Right cardiac atrium (tissue), 5 donors: ENCODE measurements at regions of chr2 and their contacts with region 1.

Region 1: DNA sequence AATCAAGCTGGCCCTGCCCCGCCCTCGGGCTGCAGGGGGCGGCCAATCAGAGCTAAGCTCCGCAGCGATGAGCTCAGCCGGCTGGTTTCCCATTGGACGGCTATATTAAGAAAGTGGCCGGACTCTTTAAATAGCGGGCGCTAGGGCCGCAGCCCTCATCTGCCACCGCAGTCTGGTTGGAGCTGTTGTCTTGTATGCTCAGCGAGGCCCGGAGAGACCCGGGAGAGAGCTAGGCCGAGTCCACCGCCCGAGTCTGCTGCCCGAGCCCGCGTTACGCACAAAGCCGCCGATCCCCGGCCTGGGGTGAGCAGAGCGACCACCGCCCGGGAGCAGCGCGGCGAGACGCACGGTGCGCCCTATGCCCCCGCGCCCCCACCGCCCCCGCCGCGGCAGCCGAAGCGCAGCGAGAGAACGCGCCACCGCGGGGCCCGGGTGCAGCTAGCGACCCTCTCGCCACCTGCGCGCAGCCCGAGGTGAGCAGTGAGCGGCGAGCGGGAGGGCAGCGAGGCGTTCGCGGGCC is at the start of gene RHOB:
- DNase-seq: peak; percentile 97 to 99 (median 99)
- ATAC-seq: peak; percentile 93 to 94
- H3K4me3 ChIP-seq: peak within 1 kb of the TSS; percentile 81
- H3K27ac ChIP-seq: peak within 1 kb of the TSS; percentile 97
- H3K4me1 ChIP-seq: peaks cover 5% of the 10 kb centered on the region
- H3K27me3 ChIP-seq: no peaks in the 10 kb centered on the region
- total RNA-seq, gene RHOB: 141 to 365 (median 217) TPM

Region 2: DNA sequence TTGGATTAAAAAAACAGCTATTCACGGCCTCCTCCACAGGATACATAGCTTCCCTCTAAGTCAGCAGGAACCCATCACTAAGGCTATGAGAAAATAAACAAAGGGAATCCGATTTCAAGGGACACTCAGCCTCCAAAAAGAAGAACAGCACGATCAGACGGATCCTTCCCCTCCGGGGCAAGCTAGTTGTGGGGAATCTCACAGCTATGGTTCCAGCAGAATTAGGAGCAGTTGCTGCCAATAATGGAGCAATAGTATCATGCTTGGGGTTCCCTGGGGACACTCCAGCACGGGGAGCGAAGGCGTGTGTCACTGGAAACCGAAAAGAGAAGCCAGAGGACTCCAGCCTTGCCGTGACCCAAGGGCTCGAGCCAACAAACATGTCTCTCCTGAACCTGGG is 708.3 kb before region 1 on chr2:
- intact Hi-C with region 1: no loop called
- DNase-seq: peak; percentile 75 to 86 (median 81)
- ATAC-seq: peak; percentile 85 to 91
- H3K4me3 ChIP-seq: no peak overlapping the region
- H3K27ac ChIP-seq: no peak overlapping the region
- H3K4me1 ChIP-seq: peaks cover 3% of the 10 kb centered on the region
- H3K27me3 ChIP-seq: no peaks in the 10 kb centered on the region

Region 3: GRCh38 chr2:20273045-20273444 is 173.9 kb before region 1 on chr2:
- intact Hi-C with region 1: no loop called
- DNase-seq: no peak
- ATAC-seq: no peak
- H3K4me3 ChIP-seq: no peak overlapping the region
- H3K27ac ChIP-seq: no peak overlapping the region
- H3K4me1 ChIP-seq: no peaks in the 10 kb centered on the region
- H3K27me3 ChIP-seq: no peaks in the 10 kb centered on the region

Region 4: DNA sequence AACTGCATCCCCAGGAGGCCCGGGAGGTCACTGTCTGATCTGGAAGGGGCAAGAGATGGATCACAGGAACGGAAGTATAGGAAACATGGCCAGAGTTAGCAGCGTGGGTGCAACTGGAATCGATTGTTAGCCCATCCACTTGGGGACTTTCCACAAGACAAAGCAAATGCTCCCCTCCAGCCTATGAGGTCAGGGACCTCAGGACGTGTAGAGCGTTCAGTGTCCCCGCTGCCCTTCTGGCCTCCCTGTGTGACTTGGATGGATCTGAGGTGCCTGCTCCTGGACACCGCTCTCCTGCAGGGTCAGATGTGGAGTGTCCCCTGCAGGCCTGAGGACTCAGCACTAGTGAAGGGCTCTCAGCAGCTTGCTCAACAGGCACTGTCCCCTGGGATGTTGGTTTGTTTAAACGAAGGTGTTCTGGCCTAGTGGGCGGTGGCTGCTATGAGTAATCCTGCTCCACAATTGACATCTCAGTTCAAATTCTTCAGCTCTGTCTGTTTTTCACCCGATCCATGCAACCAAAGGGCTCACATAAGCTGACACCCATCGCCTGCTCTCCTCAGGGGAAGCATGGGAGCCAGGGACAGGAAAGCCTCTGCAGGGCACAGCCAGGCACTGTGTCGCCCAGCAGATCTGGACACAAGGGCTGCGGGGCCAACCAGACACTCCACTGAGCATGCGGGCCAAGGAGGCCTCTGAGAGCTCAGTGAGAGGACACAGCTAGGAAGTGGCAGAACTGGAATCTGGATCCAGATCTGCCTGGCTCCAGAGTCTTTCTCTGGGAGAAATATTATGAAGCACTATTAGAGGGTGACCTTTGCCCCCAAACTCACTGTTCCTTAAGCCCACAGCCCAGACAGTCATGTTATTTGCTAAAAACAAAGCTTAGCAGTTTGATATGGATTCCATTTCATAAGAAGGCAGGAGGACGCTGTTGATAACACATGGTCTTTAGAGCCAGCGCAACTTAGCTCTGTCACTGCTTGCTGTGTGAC is 78.4 kb after region 1 on chr2:
- intact Hi-C with region 1: loop called in 2 of 4 experiments (anchors 5 kb)
- DNase-seq: peak in 2 of 3 donors; percentile 68 to 72
- ATAC-seq: peak; percentile 44 to 78
- H3K4me3 ChIP-seq: no peak overlapping the region
- H3K27ac ChIP-seq: peak overlapping the region; percentile 86
- H3K4me1 ChIP-seq: peaks cover 13% of the 10 kb centered on the region
- H3K27me3 ChIP-seq: no peaks in the 10 kb centered on the region

Region 5: DNA sequence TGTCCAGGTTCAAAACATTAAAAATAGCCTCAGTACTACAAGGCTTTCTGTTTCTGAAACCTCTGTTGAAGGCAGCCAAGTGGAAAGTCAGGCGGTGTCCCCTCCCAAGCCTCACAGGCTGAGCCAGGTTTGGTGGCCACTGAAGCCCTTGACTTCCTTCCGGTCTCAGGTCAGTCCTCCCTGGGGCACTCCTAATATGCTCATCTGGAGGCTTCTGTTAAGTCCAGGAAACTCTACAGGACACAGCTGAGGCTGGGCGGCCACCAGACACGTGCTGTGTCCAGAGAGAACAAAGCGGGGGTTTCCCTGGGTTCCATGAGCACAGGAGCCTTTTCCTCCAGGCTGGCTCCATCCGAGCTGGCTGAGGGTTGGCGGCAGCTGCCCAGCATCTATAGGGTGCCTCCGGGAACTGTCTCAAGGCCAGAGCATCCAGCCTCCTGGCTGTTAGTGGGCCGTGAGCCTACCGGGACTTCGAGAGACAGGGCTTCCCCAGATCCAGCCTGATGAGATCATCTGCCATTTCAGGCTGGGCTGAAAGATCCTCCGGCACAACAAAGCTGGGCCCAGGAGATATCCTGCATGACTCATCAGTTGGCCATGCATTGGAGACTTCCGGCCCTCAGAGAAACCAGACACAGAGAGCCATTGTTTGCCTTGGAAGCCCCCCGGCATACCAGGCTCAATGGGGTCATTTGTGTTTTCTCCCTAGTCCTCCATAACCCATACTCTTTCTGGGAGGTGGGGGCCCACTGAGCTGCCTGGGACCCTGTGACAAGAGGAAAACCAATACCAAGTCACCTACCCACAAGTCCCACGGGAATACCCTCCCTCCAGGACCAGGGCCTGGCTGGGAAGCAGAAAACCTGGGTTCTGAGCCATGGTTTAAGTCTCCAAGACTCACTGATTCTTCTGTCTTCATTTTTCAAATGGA is 132.2 kb after region 1 on chr2:
- intact Hi-C with region 1: loop called in 1 of 4 experiments (anchors 5 kb)
- DNase-seq: peak; percentile 87 to 88 (median 88)
- ATAC-seq: peak; percentile 86 to 92
- H3K4me3 ChIP-seq: no peak overlapping the region
- H3K27ac ChIP-seq: peak overlapping the region; percentile 99
- H3K4me1 ChIP-seq: peaks cover 39% of the 10 kb centered on the region
- H3K27me3 ChIP-seq: no peaks in the 10 kb centered on the region

Region 6: GRCh38 chr2:20617892-20618467 is 171.0 kb after region 1 on chr2:
- intact Hi-C with region 1: loop called in 2 of 4 experiments (anchors 5 kb)
- DNase-seq: peak; percentile 99
- ATAC-seq: peak; percentile 87 to 88
- H3K4me3 ChIP-seq: no peak overlapping the region
- H3K27ac ChIP-seq: peak overlapping the region; percentile 94
- H3K4me1 ChIP-seq: peaks cover 63% of the 10 kb centered on the region
- H3K27me3 ChIP-seq: no peaks in the 10 kb centered on the region

Region 7: GRCh38 chr2:20635675-20636584 is 189.0 kb after region 1 on chr2:
- intact Hi-C with region 1: loop called in 3 of 4 experiments (anchors 2 to 5 kb)
- DNase-seq: peak; percentile 88 to 95 (median 95)
- ATAC-seq: peak; percentile 84 to 85
- H3K4me3 ChIP-seq: no peak overlapping the region
- H3K27ac ChIP-seq: peak overlapping the region; percentile 74
- H3K4me1 ChIP-seq: peaks cover 12% of the 10 kb centered on the region
- H3K27me3 ChIP-seq: no peaks in the 10 kb centered on the region